ENCODE measurements at regions of chr2 and their contacts with region 1.

Region 1: GRCh38 chr2:27303093-27304025 is 4.9 kb downstream of the UCN start:
- DNase-seq: peak; percentile 67 to 70
- H3K4me3 ChIP-seq: no peak overlapping the region
- H3K4me3 Mint-ChIP-seq: peak overlapping the region; percentile 40
- H3K27ac Mint-ChIP-seq: peak overlapping the region; percentile 55
- H3K4me1 ChIP-seq: peaks cover 6% of the 10 kb centered on the region; the same call in 1 of the 2 replicates
- H3K4me1 Mint-ChIP-seq: peaks cover 12% of the 10 kb centered on the region
- H3K27me3 ChIP-seq: no peaks in the 10 kb centered on the region
- H3K27me3 Mint-ChIP-seq: peaks cover 3% of the 10 kb centered on the region
- CTCF ChIP-seq: peak; percentile 90 to 92

Region 2: DNA sequence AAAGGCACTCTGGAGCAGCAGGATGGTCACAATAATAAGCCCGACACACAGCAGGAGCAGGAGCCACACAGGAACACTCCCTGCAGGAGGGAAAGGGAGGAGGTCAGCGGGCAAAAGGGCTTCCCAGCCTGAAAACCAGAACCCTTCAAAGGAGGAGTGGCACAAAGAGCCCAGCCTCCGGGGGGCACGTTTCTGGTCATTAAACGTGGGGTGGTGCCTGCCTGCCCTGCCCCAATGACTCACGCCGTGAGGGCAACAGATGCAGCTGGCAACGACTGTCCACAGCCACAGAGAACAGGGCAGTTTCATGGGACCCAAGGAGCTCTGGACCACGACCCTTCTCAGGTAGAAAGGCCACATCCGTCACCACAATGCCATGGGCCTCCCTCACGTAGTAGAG is 171.9 kb before region 1 on chr2:
- CTCF ChIA-PET with region 1: no interaction called
- POLR2A ChIA-PET with region 1: no interaction called
- intact Hi-C with region 1: no loop called
- DNase-seq: no peak
- H3K4me3 ChIP-seq: no peak overlapping the region
- H3K4me3 Mint-ChIP-seq: no peak overlapping the region
- H3K27ac Mint-ChIP-seq: no peak overlapping the region
- H3K4me1 ChIP-seq: peaks cover 9% of the 10 kb centered on the region
- H3K4me1 Mint-ChIP-seq: peaks cover 9% of the 10 kb centered on the region
- H3K27me3 ChIP-seq: no peaks in the 10 kb centered on the region
- H3K27me3 Mint-ChIP-seq: no peaks in the 10 kb centered on the region
- CTCF ChIP-seq: no peak

Region 3: DNA sequence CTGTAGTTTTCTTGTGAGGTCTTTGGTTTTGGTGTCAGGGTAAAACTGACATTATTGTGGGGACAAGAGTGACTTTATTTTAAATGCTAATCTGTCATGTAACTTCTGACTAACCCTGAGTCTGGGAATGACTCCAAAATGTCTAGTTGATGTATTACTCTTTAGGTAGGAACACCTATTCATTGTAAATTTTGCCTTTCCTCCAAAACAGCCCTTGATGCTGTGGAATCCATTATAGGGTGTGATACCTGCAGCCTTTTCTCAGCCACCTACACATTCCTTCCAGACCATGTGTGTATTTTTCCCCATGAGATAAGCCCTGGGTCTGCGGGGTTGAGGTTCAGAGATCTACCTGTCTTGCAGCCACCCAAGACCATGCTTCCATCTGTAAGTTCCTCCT is 160.1 kb before region 1 on chr2:
- CTCF ChIA-PET with region 1: no interaction called
- POLR2A ChIA-PET with region 1: no interaction called
- intact Hi-C with region 1: no loop called
- DNase-seq: peak in 1 of 2 experiments; percentile 17
- H3K4me3 ChIP-seq: no peak overlapping the region
- H3K4me3 Mint-ChIP-seq: no peak overlapping the region
- H3K27ac Mint-ChIP-seq: no peak overlapping the region
- H3K4me1 ChIP-seq: no peaks in the 10 kb centered on the region
- H3K4me1 Mint-ChIP-seq: no peaks in the 10 kb centered on the region
- H3K27me3 ChIP-seq: no peaks in the 10 kb centered on the region
- H3K27me3 Mint-ChIP-seq: peaks cover 3% of the 10 kb centered on the region
- CTCF ChIP-seq: no peak

Region 4: GRCh38 chr2:27249891-27250651 is 53.3 kb before region 1 on chr2:
- CTCF ChIA-PET with region 1: interaction called, 4 read pairs
- POLR2A ChIA-PET with region 1: no interaction called
- intact Hi-C with region 1: loop called (anchors 1 kb)
- DNase-seq: peak in 1 of 2 experiments; percentile 73
- H3K4me3 ChIP-seq: no peak overlapping the region
- H3K4me3 Mint-ChIP-seq: no peak overlapping the region
- H3K27ac Mint-ChIP-seq: no peak overlapping the region
- H3K4me1 ChIP-seq: no peaks in the 10 kb centered on the region
- H3K4me1 Mint-ChIP-seq: no peaks in the 10 kb centered on the region
- H3K27me3 ChIP-seq: no peaks in the 10 kb centered on the region
- H3K27me3 Mint-ChIP-seq: no peaks in the 10 kb centered on the region
- CTCF ChIP-seq: peak; percentile 47 to 78

Region 5: DNA sequence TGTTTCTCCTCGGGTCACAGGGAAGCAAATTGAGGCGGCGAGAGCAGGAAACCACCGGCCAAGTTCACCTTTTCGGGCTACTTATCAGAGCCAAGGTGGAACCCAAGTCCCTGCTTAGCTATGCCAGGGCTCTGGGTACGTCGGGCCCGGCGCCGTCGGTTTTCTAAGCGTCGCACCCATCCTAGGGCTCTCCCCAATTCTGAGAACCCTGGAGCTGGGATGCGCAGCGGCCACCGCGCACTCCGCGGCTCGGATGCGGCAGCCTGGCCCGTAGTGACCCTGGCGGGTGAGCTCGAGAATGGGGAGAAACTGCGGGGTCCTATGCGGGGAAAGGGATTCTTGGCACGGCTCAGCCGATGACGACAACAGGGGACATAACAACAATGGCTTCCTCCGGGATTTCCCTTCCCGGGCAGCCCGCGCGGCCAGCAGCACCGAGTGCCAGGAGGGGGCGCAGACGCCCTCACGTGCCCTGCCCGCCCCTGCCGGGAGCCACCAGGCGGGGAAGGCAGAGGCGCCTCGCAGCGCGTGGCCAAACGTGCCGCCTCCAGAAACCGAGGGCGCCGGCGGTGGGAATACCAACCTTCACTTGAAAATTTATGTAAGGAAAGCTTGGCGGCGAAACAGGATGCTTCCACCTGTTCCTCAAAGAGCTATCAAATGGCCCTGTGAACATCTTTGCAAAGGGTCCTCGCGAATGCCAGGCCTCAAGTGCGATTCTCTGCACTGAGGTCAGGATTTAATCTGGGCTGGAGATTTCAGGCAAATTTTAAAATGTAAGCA is 38.4 kb before region 1 on chr2:
- CTCF ChIA-PET with region 1: interaction called, 8 read pairs
- POLR2A ChIA-PET with region 1: no interaction called
- intact Hi-C with region 1: loop called (anchors 1 kb)
- DNase-seq: peak; percentile 80 to 92
- H3K4me3 ChIP-seq: peak overlapping the region; percentile 50
- H3K4me3 Mint-ChIP-seq: peak overlapping the region; percentile 74
- H3K27ac Mint-ChIP-seq: no peak overlapping the region
- H3K4me1 ChIP-seq: peaks cover 18% of the 10 kb centered on the region
- H3K4me1 Mint-ChIP-seq: peaks cover 13% of the 10 kb centered on the region
- H3K27me3 ChIP-seq: peaks cover 6% of the 10 kb centered on the region; the same call in 1 of the 2 replicates
- H3K27me3 Mint-ChIP-seq: peaks cover 27% of the 10 kb centered on the region
- CTCF ChIP-seq: peak; percentile 78 to 88

Region 6: DNA sequence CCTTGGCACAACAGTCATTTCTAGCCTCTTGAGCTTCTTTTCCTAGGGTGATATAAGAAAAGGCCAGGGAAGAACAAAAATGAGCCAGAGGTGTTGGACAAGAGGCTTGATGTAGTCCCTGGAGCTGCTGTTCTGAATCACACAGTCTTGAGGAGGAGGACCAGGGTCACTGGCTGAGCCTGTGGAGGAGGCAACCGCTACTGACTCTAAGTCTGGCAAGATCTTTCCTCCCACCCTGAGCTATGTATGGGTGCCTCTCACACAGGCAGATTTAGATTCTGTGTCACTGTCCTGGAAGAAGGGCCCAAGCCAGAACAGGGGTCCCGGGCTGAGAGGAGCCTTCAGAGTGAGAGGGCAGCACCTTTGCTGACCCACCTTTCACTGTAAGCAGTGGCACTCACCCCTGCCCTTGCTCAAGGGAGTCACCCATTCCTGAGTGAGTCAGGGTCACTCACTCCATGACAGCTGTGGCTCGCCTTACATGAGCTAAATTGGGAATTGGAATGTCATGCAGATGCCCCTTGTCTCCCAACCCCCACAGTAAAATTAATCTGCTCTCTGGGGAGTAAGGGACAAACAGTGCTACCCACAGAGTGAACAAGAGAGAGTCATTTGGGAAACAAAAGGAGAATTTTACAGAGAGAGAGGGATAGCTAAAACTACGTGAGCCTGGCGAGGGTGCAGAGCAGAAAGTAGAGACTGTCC is 21.4 kb before region 1 on chr2 and contains the start of gene TRIM54:
- CTCF ChIA-PET with region 1: interaction called, 40 read pairs
- POLR2A ChIA-PET with region 1: no interaction called
- intact Hi-C with region 1: loop called (anchors 1 kb)
- DNase-seq: no peak
- H3K4me3 ChIP-seq: no peak within 1 kb of the TSS
- H3K4me3 Mint-ChIP-seq: no peak within 1 kb of the TSS
- H3K27ac Mint-ChIP-seq: peak within 1 kb of the TSS; percentile 68
- H3K4me1 ChIP-seq: peaks cover 7% of the 10 kb centered on the region
- H3K4me1 Mint-ChIP-seq: peaks cover 16% of the 10 kb centered on the region
- H3K27me3 ChIP-seq: no peaks in the 10 kb centered on the region
- H3K27me3 Mint-ChIP-seq: no peaks in the 10 kb centered on the region
- CTCF ChIP-seq: no peak
- total RNA-seq, gene TRIM54: 0.25 TPM in 1 of 2 replicates, not detected in the other

Region 7: GRCh38 chr2:27291865-27292264 is 11.5 kb before region 1 on chr2:
- CTCF ChIA-PET with region 1: interaction called, 41 read pairs
- POLR2A ChIA-PET with region 1: interaction called, 4 read pairs
- intact Hi-C with region 1: no loop called
- DNase-seq: peak in 1 of 2 experiments; percentile 42
- H3K4me3 ChIP-seq: no peak overlapping the region
- H3K4me3 Mint-ChIP-seq: peak overlapping the region; percentile 17
- H3K27ac Mint-ChIP-seq: peak overlapping the region; percentile 47
- H3K4me1 ChIP-seq: peaks cover 61% of the 10 kb centered on the region
- H3K4me1 Mint-ChIP-seq: peaks cover 42% of the 10 kb centered on the region
- H3K27me3 ChIP-seq: no peaks in the 10 kb centered on the region
- H3K27me3 Mint-ChIP-seq: no peaks in the 10 kb centered on the region
- CTCF ChIP-seq: peak in 1 of 2 experiments; percentile 19

Region 8: DNA sequence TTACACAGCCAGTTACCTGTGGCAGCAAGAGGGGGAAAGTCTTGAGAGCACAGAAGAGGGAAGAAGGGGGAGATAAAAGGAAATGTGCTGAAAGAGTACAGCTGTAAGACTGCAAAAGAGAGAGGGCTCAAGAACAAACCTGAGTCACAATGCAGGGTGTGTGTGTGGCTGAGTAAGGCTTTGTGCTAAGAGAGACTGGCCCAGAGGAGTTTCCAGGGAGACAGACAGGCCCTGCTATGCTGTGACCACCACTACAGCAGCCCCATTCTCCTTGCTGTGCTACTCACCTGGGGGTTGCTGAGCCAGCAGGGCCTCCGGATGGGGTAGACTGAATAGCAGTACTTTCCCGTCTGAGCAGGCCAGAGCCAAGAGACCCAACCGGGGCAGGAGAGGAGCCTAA is 32.0 kb after region 1 on chr2:
- CTCF ChIA-PET with region 1: no interaction called
- POLR2A ChIA-PET with region 1: no interaction called
- intact Hi-C with region 1: no loop called
- DNase-seq: no peak
- H3K4me3 ChIP-seq: no peak overlapping the region
- H3K4me3 Mint-ChIP-seq: no peak overlapping the region
- H3K27ac Mint-ChIP-seq: no peak overlapping the region
- H3K4me1 ChIP-seq: no peaks in the 10 kb centered on the region
- H3K4me1 Mint-ChIP-seq: no peaks in the 10 kb centered on the region
- H3K27me3 ChIP-seq: no peaks in the 10 kb centered on the region
- H3K27me3 Mint-ChIP-seq: no peaks in the 10 kb centered on the region
- CTCF ChIP-seq: no peak

Region 9: GRCh38 chr2:27606611-27607010 is 303.3 kb after region 1 on chr2:
- CTCF ChIA-PET with region 1: no interaction called
- POLR2A ChIA-PET with region 1: no interaction called
- intact Hi-C with region 1: no loop called
- DNase-seq: no peak
- H3K4me3 ChIP-seq: no peak overlapping the region
- H3K4me3 Mint-ChIP-seq: no peak overlapping the region
- H3K27ac Mint-ChIP-seq: no peak overlapping the region
- H3K4me1 ChIP-seq: 0 out of 2 replicates have a peak, but pooled peaks cover 4% of the 10 kb centered on the region
- H3K4me1 Mint-ChIP-seq: no peaks in the 10 kb centered on the region
- H3K27me3 ChIP-seq: no peaks in the 10 kb centered on the region
- H3K27me3 Mint-ChIP-seq: no peaks in the 10 kb centered on the region
- CTCF ChIP-seq: no peak